ENCODE measurements at regions of chr7 and their contacts with region 1.

Region 1: GRCh38 chr7:99392677-99393354 is 15.6 kb downstream of the PDAP1 start:
- DNase-seq: no peak
- ATAC-seq: peak; percentile 65
- H3K4me3 ChIP-seq: peak overlapping the region in 1 of 2 experiments; percentile 7; a peak in 1 of 4 replicates
- H3K27ac ChIP-seq: peak overlapping the region; percentile 53
- H3K4me1 ChIP-seq: peaks cover 49% of the 10 kb centered on the region
- H3K27me3 ChIP-seq: no peaks in the 10 kb centered on the region
- CTCF ChIP-seq: no peak

Region 2: DNA sequence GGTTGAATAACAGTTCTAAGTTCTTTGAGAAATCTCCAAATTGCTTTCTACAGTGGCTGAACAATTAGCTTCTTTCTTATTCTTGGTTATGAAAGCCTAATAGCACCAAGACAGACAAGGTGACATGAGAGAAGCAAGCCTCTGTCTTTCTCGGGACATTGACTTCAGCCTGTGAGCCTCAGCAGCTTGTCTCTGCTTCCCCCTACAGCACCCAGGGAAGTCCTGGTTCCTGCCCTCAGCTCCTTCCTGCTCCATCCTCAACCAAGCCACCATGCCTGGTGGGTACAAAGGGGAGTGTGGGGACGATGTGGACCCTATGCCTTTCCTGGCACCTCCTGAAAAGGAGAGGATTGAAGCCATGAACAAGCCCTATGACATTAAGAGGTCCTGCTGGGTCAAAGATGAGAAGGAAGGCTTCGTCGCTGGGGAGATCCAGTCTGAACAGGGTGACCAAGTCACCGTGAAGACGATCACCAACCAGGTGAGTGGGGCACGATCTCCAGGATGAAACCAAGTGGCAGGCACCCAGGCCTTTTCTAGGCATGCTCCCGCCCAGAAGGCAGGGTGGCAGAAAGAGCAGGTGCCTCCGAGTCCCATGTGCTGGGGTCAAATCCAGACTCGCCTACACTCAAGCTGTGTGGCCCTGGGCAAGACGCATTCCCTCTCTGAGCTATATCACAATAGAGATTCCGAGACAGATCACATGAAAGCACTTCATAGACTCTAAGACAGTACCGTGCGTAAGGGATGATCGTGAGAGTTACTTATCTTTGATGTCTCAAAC is 154.1 kb before region 1 on chr7:
- CTCF ChIA-PET with region 1: no interaction called
- POLR2A ChIA-PET with region 1: interaction called, 13 read pairs
- in situ Hi-C with region 1: no loop called
- intact Hi-C with region 1: no loop called
- DNase-seq: no peak
- ATAC-seq: no peak
- H3K4me3 ChIP-seq: no peak overlapping the region
- H3K27ac ChIP-seq: no peak overlapping the region
- H3K4me1 ChIP-seq: no peaks in the 10 kb centered on the region
- H3K27me3 ChIP-seq: no peaks in the 10 kb centered on the region
- CTCF ChIP-seq: no peak

Region 3: DNA sequence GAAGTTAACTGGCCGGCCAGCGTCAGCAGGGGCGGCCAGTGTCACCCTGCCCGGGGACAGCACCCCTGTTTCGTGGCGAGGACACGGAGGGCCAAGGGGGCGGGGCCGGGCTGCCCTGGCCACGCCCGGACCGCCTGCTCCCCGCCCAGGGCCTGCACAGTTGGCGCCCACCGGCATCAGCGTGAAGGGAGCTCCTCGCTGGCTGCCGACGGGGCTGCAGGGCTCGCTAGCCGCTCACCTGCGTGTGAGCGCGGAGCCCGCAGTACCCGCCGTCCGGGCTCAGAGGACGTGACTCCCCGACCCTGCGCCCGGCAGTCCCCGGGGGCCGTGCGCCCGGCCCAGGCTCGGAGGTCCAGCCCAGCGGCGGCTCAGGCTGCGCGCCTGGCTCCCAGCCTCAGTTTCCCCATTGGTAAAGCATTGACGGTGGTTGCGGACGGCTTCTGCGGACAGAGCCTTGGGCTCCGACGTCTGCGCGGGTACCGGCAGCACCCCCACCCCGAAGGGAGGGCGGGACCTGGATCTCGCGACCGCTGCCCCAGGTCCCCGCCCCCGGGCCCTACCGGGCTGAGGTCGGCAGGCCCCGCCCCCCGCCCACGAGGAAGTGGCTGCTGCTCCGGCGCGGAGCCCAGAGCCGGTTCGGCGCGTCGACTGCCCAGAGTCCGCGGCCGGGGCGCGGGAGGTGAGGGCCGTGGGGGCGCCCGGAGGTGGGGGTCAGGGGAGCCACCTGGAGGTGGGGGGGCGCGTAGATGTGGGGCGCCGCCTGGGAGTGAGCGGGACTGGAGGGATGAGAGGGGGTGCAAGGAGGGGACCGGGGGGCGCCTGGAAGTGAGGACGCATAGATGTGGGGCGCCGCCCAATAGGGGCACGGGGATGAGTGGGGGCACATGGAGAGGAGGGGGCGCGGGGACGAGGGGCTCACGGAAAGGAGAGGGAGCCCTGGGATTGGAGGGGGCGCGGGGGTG is 18.4 kb before region 1 on chr7 and contains the start of gene ARPC1B:
- CTCF ChIA-PET with region 1: interaction called, 10 read pairs
- POLR2A ChIA-PET with region 1: interaction called, 6 read pairs
- in situ Hi-C with region 1: no loop called
- intact Hi-C with region 1: no loop called
- DNase-seq: no peak
- ATAC-seq: peak; percentile 87
- H3K4me3 ChIP-seq: peak within 1 kb of the TSS; percentile 63 to 81
- H3K27ac ChIP-seq: peak within 1 kb of the TSS; percentile 77
- H3K4me1 ChIP-seq: peaks cover 33% of the 10 kb centered on the region
- H3K27me3 ChIP-seq: no peaks in the 10 kb centered on the region
- CTCF ChIP-seq: no peak
- total RNA-seq, gene ARPC1B: 266 TPM

Region 4: GRCh38 chr7:100015232-100016209 is 622.7 kb after region 1 on chr7 and contains the start of gene ZKSCAN1:
- CTCF ChIA-PET with region 1: no interaction called
- POLR2A ChIA-PET with region 1: interaction called, 17 read pairs
- in situ Hi-C with region 1: no loop called
- intact Hi-C with region 1: no loop called
- DNase-seq: peak; percentile 69
- ATAC-seq: peak; percentile 99
- H3K4me3 ChIP-seq: peak within 1 kb of the TSS; percentile 88 to 92
- H3K27ac ChIP-seq: peak within 1 kb of the TSS; percentile 94
- H3K4me1 ChIP-seq: peaks cover 22% of the 10 kb centered on the region
- H3K27me3 ChIP-seq: no peaks in the 10 kb centered on the region
- CTCF ChIP-seq: no peak
- total RNA-seq, gene ZKSCAN1: 55.5 TPM